CD4-positive, alpha-beta memory T cell (primary cell): ENCODE measurements at regions of chr1 and their contacts with region 1.

Region 1: DNA sequence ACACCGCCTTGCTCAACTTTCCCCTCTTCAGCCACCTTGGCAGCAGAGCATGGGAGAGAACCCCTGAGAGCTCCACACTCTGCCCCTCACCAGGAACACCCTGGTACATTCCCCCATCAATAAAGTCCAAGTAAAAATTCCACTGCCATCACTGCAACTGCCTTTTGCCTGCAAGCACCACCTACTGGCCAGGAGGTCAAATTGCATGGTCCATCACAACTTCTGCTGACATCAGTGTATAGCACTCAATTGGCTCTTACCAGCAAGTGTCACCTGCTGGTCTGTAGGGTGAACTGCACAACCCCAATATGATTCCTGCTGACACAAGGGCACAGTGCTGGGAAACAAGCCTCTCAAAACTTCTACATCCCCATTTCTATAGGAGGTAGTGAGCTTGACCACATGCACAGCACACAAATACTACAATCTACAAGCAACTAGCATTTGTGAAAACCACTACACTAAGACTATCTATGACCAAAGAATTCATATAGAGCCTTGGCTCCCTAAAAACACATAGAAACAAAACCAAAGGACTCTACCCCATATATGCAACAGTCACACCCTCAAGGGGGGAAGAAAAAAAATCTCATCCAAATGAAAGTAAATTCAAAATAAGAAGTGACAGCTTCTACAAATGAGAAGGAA is 69.2 kb downstream of the FASLG start:
- DNase-seq: peak; percentile 48 to 65 (median 58)
- H3K4me3 ChIP-seq: no peak overlapping the region
- H3K4me3 Mint-ChIP-seq: peak overlapping the region in 1 of 8 donors; percentile 5
- H3K27ac ChIP-seq: no peak overlapping the region
- H3K27ac Mint-ChIP-seq: peak overlapping the region in 1 of 7 donors; percentile 28
- H3K4me1 ChIP-seq: peaks cover 14% of the 10 kb centered on the region
- H3K4me1 Mint-ChIP-seq: peaks cover 11 to 26% (median 21%) of the 10 kb centered on the region in 4 donors
- H3K27me3 ChIP-seq: no peaks in the 10 kb centered on the region
- H3K27me3 Mint-ChIP-seq: no peaks in the 10 kb centered on the region

Region 2: DNA sequence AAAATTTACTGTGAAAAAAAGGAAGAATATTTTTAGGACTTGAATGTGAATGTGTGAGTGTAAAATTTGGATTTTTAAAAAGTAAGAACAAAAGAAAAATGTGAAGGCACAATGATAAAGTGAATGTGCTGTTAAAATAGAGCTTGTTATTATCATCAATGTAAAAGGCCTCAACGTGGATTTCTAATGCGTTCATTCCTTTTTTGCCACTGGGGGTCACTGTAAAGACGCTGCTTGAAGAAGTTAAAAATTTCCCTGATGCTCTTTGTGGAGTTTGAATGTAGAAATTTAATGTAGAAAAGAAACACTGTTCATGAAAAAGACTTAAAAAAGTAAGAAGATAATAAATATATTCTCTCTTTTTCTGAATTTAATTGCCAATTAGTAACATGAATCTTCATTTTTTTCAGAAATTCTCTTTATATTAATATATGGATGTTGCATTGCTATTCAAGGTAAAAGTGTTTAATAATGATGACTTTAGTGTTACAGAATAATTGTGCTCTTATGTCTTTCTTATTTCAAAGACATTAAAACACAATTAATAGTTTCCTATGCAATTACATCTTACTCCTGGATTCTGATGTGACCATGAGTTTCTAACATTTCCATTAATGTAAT is 725.2 kb before region 1 on chr1:
- CTCF ChIA-PET with region 1: no interaction called
- POLR2A ChIA-PET with region 1: no interaction called
- intact Hi-C with region 1: loop called (anchors 5 kb)
- DNase-seq: peak; percentile 30 to 46 (median 32)
- H3K4me3 ChIP-seq: no peak overlapping the region
- H3K4me3 Mint-ChIP-seq: no peak overlapping the region
- H3K27ac ChIP-seq: no peak overlapping the region
- H3K27ac Mint-ChIP-seq: no peak overlapping the region
- H3K4me1 ChIP-seq: no peaks in the 10 kb centered on the region
- H3K4me1 Mint-ChIP-seq: peaks cover 6 to 16% (median 8%) of the 10 kb centered on the region in 4 donors
- H3K27me3 ChIP-seq: no peaks in the 10 kb centered on the region
- H3K27me3 Mint-ChIP-seq: no peaks in the 10 kb centered on the region

Region 3: GRCh38 chr1:172449585-172450534 is 278.2 kb before region 1 on chr1:
- CTCF ChIA-PET with region 1: interaction called, 12 read pairs
- POLR2A ChIA-PET with region 1: no interaction called
- intact Hi-C with region 1: loop called (anchors 1 kb)
- DNase-seq: peak; percentile 26 to 46 (median 33)
- H3K4me3 ChIP-seq: no peak overlapping the region
- H3K4me3 Mint-ChIP-seq: peak overlapping the region in 7 of 8 donors; percentile 10 to 69 (median 39)
- H3K27ac ChIP-seq: no peak overlapping the region
- H3K27ac Mint-ChIP-seq: peak overlapping the region in 3 of 7 donors; percentile 34 to 84 (median 70)
- H3K4me1 ChIP-seq: peaks cover 21% of the 10 kb centered on the region
- H3K4me1 Mint-ChIP-seq: peaks cover 5 to 32% (median 20%) of the 10 kb centered on the region in 4 donors
- H3K27me3 ChIP-seq: no peaks in the 10 kb centered on the region
- H3K27me3 Mint-ChIP-seq: no peaks in the 10 kb centered on the region

Region 4: DNA sequence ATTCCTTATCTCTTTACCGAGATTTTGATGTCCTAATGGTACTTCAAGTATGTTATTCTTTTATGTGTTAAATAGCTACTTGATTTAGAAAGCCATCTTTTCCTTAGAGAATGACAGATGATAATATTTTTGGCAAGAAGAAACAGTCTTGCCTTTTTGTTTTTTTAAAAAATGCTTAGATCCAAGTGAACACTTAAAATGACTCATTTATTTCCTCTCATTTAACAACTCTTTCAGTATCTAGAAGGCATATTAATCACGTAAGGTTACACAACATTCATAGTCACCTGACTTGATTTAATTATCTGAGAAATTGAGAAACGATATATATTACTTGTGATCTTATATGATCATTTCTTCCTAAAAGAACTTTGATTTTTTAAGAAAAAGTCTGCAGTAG is 142.7 kb before region 1 on chr1:
- CTCF ChIA-PET with region 1: interaction called, 4 read pairs
- POLR2A ChIA-PET with region 1: no interaction called
- intact Hi-C with region 1: loop called (anchors 1 kb)
- DNase-seq: no peak
- H3K4me3 ChIP-seq: no peak overlapping the region
- H3K4me3 Mint-ChIP-seq: no peak overlapping the region
- H3K27ac ChIP-seq: no peak overlapping the region
- H3K27ac Mint-ChIP-seq: peak overlapping the region in 1 of 7 donors; percentile 35
- H3K4me1 ChIP-seq: peaks cover 5% of the 10 kb centered on the region
- H3K4me1 Mint-ChIP-seq: peaks cover 7 to 28% (median 15%) of the 10 kb centered on the region in 4 donors
- H3K27me3 ChIP-seq: no peaks in the 10 kb centered on the region
- H3K27me3 Mint-ChIP-seq: no peaks in the 10 kb centered on the region

Region 5: DNA sequence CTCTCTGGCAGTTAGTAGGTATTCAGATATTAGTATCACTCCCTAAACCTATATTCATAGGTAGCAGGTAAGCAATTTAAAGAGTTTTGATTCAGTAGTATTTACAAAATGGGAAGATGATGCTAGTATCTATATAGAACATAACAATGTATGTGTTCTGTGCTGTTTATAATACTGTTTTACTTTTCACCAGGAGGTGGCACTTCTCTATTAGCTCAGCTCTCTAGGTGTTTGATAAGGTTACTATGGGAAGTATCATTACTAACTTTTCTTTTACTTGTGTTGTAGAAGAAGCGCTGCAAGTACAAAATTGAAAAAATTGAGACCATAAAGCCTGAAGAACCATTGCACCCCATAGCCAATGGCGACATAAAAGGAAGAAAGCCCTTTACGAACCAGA is 118.6 kb before region 1 on chr1:
- CTCF ChIA-PET with region 1: interaction called, 90 read pairs
- POLR2A ChIA-PET with region 1: interaction called, 3 read pairs
- intact Hi-C with region 1: no loop called
- DNase-seq: peak in 4 of 5 donors; percentile 34 to 41 (median 38)
- H3K4me3 ChIP-seq: no peak overlapping the region
- H3K4me3 Mint-ChIP-seq: no peak overlapping the region
- H3K27ac ChIP-seq: no peak overlapping the region
- H3K27ac Mint-ChIP-seq: peak overlapping the region in 1 of 7 donors; percentile 43
- H3K4me1 ChIP-seq: no peaks in the 10 kb centered on the region
- H3K4me1 Mint-ChIP-seq: peaks cover 4 to 9% (median 6%) of the 10 kb centered on the region in 4 donors
- H3K27me3 ChIP-seq: no peaks in the 10 kb centered on the region
- H3K27me3 Mint-ChIP-seq: no peaks in the 10 kb centered on the region